ENCODE measurements at regions of chr16 and their contacts with region 1.

Region 1: DNA sequence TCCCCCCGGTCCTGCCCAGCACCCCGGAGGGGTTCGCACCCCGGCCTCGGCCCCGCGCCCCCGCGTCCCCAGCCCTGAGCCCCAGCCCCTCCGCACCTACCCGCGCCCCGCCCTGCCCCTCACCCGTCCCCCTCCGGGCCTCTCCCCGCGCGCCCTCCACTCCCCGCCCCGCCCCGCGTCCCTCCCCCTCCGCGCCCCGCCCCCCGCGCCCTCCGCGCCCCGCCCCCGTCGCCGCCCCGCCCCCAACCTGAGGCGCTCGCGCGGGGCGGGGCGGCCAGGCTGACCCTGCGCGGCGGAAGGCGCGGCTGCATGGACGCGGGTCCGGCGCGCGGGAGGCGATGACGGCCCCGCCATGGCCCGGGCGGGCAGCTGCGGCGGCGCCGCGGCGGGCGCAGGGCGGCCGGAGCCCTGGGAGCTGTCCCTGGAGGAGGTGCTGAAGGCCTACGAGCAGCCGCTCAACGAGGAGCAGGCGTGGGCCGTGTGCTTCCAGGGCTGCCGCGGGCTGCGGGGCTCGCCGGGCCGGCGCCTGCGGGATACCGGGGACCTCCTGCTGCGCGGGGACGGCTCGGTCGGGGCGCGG is at the start of gene SPIRE2:
- DNase-seq: peak in 1 of 2 experiments; percentile 88
- H3K4me3 ChIP-seq: peak within 1 kb of the TSS; percentile 42 to 83 (median 63)
- H3K27ac ChIP-seq: no peak within 1 kb of the TSS
- H3K4me1 ChIP-seq: peaks cover 0 to 9% (median 5%) of the 10 kb centered on the region in 4 experiments; a peak in 4 of 7 replicates
- H3K27me3 ChIP-seq: no peaks in the 10 kb centered on the region
- CTCF ChIP-seq: no peak
- EP300 ChIP-seq: no peak
- POLR2A ChIP-seq: no peak
- RAD21 ChIP-seq: no peak
- total RNA-seq, gene SPIRE2: 12.2 and 15.4 TPM in 2 replicates

Region 2: DNA sequence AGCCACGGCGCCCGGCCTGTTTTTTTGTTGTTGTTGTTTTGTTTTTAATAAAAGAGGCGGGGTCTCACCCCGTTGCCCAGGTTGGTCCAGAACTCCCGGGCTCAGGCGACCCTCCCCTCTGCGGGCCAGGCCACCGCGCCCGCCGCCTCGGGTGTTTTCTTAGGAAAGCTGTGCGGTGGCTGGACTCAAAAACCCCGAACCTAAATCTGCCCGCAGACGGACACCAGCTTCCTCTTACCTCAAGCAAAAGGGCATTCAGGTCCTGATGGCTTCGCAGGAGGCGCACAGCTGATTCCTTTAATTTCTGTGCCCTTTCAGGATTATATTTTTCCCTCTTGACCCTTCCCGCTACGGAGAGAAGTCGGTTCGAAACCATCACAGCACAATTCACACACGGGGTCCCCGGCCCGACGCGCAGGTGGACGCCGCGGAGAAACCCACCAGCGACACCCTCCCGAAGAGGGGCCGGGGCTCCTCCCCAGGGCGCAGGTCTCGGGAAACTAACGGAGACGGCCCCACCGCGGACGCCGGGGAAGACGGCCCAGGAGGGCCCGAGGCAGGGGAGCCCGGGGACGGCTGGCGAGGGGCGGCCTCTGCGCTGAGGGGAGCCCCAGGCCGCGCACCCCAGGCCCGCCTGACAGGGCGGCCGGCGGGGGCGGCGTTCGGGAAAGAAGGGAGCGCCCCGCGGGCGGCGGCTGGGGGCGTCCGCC is 12.5 kb before region 1 on chr16:
- CTCF ChIA-PET with region 1: interaction called, 5 read pairs
- POLR2A ChIA-PET with region 1: interaction called, 34 read pairs
- DNase-seq: peak in 1 of 2 experiments; percentile 49
- H3K4me3 ChIP-seq: peak overlapping the region; percentile 61 to 82 (median 66)
- H3K27ac ChIP-seq: no peak overlapping the region
- H3K4me1 ChIP-seq: peaks cover 0 to 5% (median 0%) of the 10 kb centered on the region in 4 experiments; a peak in 3 of 7 replicates
- H3K27me3 ChIP-seq: no peaks in the 10 kb centered on the region; a peak in 1 of 7 replicates
- CTCF ChIP-seq: no peak
- EP300 ChIP-seq: no peak
- POLR2A ChIP-seq: no peak
- RAD21 ChIP-seq: no peak

Region 3: GRCh38 chr16:89842471-89843408 is 14.5 kb after region 1 on chr16:
- CTCF ChIA-PET with region 1: no interaction called
- POLR2A ChIA-PET with region 1: interaction called, 16 read pairs
- DNase-seq: no peak
- H3K4me3 ChIP-seq: no peak overlapping the region
- H3K27ac ChIP-seq: no peak overlapping the region
- H3K4me1 ChIP-seq: peaks cover 0 to 5% (median 1%) of the 10 kb centered on the region in 4 experiments; a peak in 2 of 7 replicates
- H3K27me3 ChIP-seq: no peaks in the 10 kb centered on the region
- CTCF ChIP-seq: no peak
- EP300 ChIP-seq: no peak
- POLR2A ChIP-seq: no peak
- RAD21 ChIP-seq: no peak

Region 4: GRCh38 chr16:89873972-89874689 is 45.8 kb after region 1 on chr16:
- CTCF ChIA-PET with region 1: no interaction called
- POLR2A ChIA-PET with region 1: interaction called, 15 read pairs
- DNase-seq: peak; percentile 92 to 98
- H3K4me3 ChIP-seq: peak overlapping the region; percentile 84 to 97 (median 90)
- H3K27ac ChIP-seq: peak overlapping the region; percentile 40; the same call in 1 of the 2 replicates
- H3K4me1 ChIP-seq: peaks cover 0 to 9% (median 2%) of the 10 kb centered on the region in 4 experiments; a peak in 4 of 7 replicates
- H3K27me3 ChIP-seq: no peaks in the 10 kb centered on the region
- CTCF ChIP-seq: no peak
- EP300 ChIP-seq: no peak
- POLR2A ChIP-seq: peak in 1 of 2 experiments; percentile 35; a peak in 1 of 3 replicates
- RAD21 ChIP-seq: no peak